Endothelial cell of umbilical vein (primary cell): ENCODE measurements at regions of chr10 and their contacts with region 1.

Region 1: GRCh38 chr10:77721815-77722214 is 84.2 kb upstream of the KCNMA1 start:
- DNase-seq: no peak
- H3K4me3 ChIP-seq: no peak overlapping the region
- H3K27ac ChIP-seq: no peak overlapping the region
- H3K4me1 ChIP-seq: peaks cover 5% of the 10 kb centered on the region
- H3K27me3 ChIP-seq: no peaks in the 10 kb centered on the region
- CTCF ChIP-seq: no peak
- POLR2A ChIP-seq: no peak

Region 2: DNA sequence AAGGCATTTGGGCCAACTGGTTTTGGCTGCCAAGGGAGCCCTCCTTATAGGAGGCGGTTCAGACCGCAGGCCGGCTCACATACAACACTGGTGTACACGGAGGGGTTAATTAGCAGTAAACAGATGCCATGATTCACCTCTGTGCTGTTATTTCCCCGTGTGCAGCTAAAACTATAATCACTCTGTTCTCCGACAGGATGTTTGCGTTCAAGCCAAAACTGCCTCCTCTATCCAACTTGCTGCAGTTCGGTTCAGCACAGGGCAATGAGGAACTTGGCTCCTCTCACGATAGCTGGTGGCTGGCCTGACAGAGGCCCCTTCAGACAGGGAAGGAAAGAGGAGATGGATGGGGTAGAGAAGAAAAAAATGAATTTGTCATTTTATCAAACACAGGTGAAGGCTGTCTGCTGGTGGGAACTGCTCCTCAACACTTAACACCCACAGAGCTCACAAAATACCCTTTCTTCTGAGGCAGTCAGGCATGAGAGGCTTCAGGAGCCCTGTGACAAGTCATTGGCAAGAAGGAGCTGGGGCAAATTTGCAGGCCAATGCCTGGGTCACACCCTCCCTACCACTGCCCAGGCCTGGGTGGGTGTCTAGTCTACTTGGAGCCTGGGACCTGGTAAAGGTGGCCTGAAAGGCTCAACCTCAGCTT is 108.2 kb before region 1 on chr10:
- CTCF ChIA-PET with region 1: no interaction called
- POLR2A ChIA-PET with region 1: no interaction called
- dilution Hi-C with region 1: no loop called
- intact Hi-C with region 1: no loop called
- DNase-seq: no peak
- H3K4me3 ChIP-seq: no peak overlapping the region
- H3K27ac ChIP-seq: no peak overlapping the region
- H3K4me1 ChIP-seq: no peaks in the 10 kb centered on the region
- H3K27me3 ChIP-seq: peaks cover 0 to 13% of the 10 kb centered on the region in 2 experiments
- CTCF ChIP-seq: no peak
- POLR2A ChIP-seq: no peak

Region 3: GRCh38 chr10:77737608-77738007 is 15.8 kb after region 1 on chr10:
- CTCF ChIA-PET with region 1: interaction called, 12 read pairs
- POLR2A ChIA-PET with region 1: no interaction called
- dilution Hi-C with region 1: no loop called
- intact Hi-C with region 1: loop called (anchors 2 kb)
- DNase-seq: peak; percentile 94
- H3K4me3 ChIP-seq: no peak overlapping the region
- H3K27ac ChIP-seq: peak overlapping the region; percentile 90
- H3K4me1 ChIP-seq: peaks cover 20% of the 10 kb centered on the region
- H3K27me3 ChIP-seq: no peaks in the 10 kb centered on the region
- CTCF ChIP-seq: no peak
- POLR2A ChIP-seq: peak; percentile 37